Naive thymus-derived CD8-positive, alpha-beta T cell (primary cell): ENCODE measurements at regions of chr3 and their contacts with region 1.

Region 1: DNA sequence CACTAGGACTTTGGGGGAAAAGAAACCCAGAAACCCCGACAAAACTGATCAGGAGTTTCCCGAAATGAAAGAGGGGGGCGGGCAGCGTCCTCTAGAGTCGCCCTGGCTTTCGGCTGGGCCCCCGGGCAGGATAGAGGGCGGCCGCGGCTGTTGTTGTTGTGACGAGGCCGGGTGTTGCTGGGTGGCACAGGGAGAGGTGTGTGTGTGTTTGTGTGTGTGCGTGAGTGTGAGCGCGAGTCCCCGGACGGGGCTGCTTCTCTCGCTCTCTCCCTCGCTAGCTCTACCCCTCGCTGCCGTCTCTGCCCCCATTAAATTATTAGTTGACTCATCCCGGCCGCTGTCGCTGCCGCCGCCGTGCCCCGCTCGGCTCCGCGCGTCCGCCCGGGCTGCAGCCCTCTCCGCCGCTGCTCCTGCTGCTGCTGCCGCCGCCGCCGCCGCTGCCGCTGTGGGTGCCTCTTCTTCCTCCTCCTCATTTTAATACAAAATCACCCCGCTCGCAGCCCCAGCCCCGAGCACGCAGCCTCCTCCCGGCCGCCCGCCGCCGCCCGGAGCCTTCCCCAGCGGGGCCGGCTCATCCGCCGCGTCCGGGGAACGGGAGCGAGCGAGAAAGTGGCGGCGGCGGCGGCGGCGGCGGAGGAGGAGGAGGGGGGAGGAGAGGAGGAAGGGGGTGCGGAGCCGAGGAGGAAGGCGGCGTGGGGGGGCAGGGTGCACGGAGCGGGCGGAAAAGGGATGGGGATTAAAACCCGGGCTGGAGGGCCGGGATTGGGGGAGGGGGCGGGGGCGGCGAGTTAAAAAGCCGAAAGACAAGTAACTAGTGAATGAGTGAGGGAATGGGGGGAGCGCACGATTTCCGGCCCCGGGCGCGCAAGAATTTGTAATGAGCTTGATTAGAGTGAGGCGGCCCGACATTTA is at the start of gene SATB1:
- DNase-seq: peak; percentile 48 to 81 (median 64)
- ATAC-seq: peak; percentile 18 to 41
- H3K4me3 Mint-ChIP-seq: peak within 1 kb of the TSS; percentile 93 to 99 (median 96)
- H3K27ac Mint-ChIP-seq: peak within 1 kb of the TSS; percentile 94 to 99 (median 99)
- H3K4me1 Mint-ChIP-seq: peaks cover 37 to 79% (median 65%) of the 10 kb centered on the region in 4 donors
- H3K27me3 Mint-ChIP-seq: no peaks in the 10 kb centered on the region
- polyA plus RNA-seq, gene SATB1: 196 to 265 (median 242) TPM

Region 2: DNA sequence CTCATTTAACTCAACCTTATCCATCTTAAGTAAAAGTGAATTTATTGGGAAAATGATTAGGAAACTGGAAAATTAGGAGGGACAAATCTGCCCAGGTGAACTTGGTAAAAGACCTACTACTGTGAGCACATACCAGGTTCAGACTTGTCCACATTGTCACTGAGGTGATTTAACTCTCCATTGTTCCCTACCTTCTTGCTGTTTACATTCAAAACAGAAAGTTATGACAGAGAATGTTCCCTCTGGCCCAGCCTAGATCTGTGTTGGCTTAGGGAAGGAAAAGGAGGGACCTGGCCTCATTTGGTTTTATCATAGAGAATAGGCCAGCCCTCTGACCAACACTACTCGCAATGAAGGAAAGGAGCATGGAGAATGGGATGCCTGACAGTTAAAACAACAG is 117.5 kb before region 1 on chr3:
- POLR2A ChIA-PET with region 1: no interaction called
- DNase-seq: no peak
- ATAC-seq: no peak
- H3K4me3 Mint-ChIP-seq: no peak overlapping the region
- H3K27ac Mint-ChIP-seq: peak overlapping the region in 1 of 10 donors; percentile 44
- H3K4me1 Mint-ChIP-seq: peaks cover 0 to 2% (median 0%) of the 10 kb centered on the region in 4 donors
- H3K27me3 Mint-ChIP-seq: no peaks in the 10 kb centered on the region

Region 3: GRCh38 chr3:18411541-18411940 is 13.4 kb before region 1 on chr3:
- POLR2A ChIA-PET with region 1: interaction called, 33 read pairs
- DNase-seq: peak in 3 of 10 donors; percentile 65 to 77 (median 74)
- ATAC-seq: peak; percentile 38 to 80
- H3K4me3 Mint-ChIP-seq: peak overlapping the region; percentile 41 to 84 (median 77)
- H3K27ac Mint-ChIP-seq: peak overlapping the region; percentile 10 to 97 (median 90)
- H3K4me1 Mint-ChIP-seq: peaks cover 30 to 92% (median 77%) of the 10 kb centered on the region in 4 donors
- H3K27me3 Mint-ChIP-seq: no peaks in the 10 kb centered on the region

Region 4: GRCh38 chr3:18438586-18438985 is 13.6 kb after region 1 on chr3:
- POLR2A ChIA-PET with region 1: interaction called, 65 read pairs
- DNase-seq: peak; percentile 48 to 90 (median 80)
- ATAC-seq: peak; percentile 87 to 94
- H3K4me3 Mint-ChIP-seq: peak overlapping the region; percentile 80 to 90 (median 86)
- H3K27ac Mint-ChIP-seq: peak overlapping the region; percentile 91 to 97 (median 96)
- H3K4me1 Mint-ChIP-seq: peaks cover 21 to 78% (median 46%) of the 10 kb centered on the region in 4 donors
- H3K27me3 Mint-ChIP-seq: no peaks in the 10 kb centered on the region